ENCODE measurements at regions of chr10 and their contacts with region 1.

Region 1: GRCh38 chr10:57579926-57580325 is 687.8 kb downstream of the IPMK start:
- DNase-seq: no peak

Region 2: GRCh38 chr10:58152673-58153263 is 572.8 kb after region 1 on chr10:
- intact Hi-C with region 1: loop called (anchors 5 kb)
- DNase-seq: peak in 8 of 10 donors; percentile 39 to 89 (median 66)